Breast epithelium (tissue), 4 donors: ENCODE measurements at regions of chr2 and their contacts with region 1.

Region 1: DNA sequence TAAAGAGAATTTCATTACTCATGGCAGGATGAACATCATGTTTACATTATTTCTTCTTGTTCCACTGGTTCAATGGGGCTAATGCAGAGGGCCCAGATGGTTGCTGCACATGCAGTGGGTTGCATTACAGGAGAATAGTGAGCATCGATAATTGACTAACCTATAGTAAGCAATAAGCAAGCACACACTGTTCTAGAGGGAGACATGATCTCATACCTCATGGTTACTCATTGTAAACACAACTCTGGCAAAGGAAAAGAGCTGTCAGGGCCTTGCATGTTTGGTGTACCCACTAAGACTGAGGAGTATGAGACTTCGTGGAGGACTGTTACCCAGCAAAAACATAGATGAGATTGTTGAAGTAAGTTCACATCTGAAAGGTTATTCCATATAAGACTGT is 885.6 kb upstream of the VRK2 start:
- DNase-seq: no peak
- H3K4me3 ChIP-seq: no peak overlapping the region
- H3K27ac ChIP-seq: no peak overlapping the region
- H3K4me1 ChIP-seq: no peaks in the 10 kb centered on the region
- H3K27me3 ChIP-seq: no peaks in the 10 kb centered on the region
- CTCF ChIP-seq: no peak
- POLR2A ChIP-seq: no peak

Region 2: GRCh38 chr2:57796527-57796926 is 635.6 kb after region 1 on chr2:
- intact Hi-C with region 1: loop called (anchors 10 kb)
- DNase-seq: no peak
- H3K4me3 ChIP-seq: no peak overlapping the region
- H3K27ac ChIP-seq: no peak overlapping the region
- H3K4me1 ChIP-seq: no peaks in the 10 kb centered on the region
- H3K27me3 ChIP-seq: no peaks in the 10 kb centered on the region
- CTCF ChIP-seq: no peak
- POLR2A ChIP-seq: no peak